ENCODE measurements at regions of chrX and their contacts with region 1.

Region 1: GRCh38 chrX:118847676-118848075 is 24.1 kb downstream of the ZCCHC12 start:
- DNase-seq: peak; percentile 41
- H3K4me3 ChIP-seq: no peak overlapping the region
- H3K27ac ChIP-seq: no peak overlapping the region
- H3K4me1 ChIP-seq: no peaks in the 10 kb centered on the region
- CTCF ChIP-seq: peak; percentile 78

Region 2: DNA sequence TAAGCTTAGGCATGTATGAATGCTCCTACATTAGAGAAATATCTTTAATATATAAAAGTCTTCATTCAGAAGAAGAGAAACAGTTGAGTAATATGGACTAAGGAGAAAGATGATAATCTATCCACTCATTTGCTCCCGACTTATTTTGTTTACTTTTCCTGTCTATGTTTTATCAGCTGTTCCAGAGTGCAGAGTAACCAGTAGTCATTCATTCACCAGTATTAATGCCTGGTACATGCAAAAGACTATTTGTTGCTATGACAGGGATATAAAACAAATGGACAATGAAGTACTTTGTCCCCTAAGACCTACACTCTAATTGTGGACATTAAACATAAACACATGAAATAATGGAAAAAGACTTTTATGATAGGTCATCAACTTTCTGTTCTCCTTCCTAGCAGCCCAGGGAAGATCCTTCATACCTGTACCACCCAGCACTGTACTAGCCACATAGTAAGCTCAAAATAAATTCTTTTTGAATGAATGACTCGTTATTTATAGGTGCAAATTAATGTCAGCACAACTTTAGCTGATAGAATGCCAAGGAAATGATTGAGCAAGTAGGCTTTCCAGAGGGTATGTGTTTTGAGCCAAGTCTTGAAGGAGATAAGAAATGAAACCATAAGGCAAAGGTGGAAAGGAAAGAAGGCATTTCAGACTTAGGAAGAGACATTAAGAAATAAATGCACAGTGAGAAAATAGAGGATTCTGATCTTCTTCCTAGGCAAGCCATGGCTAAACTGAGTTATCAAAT is 165.2 kb before region 1 on chrX:
- CTCF ChIA-PET with region 1: no interaction called
- POLR2A ChIA-PET with region 1: no interaction called
- intact Hi-C with region 1: no loop called
- DNase-seq: no peak
- H3K4me3 ChIP-seq: no peak overlapping the region
- H3K27ac ChIP-seq: no peak overlapping the region
- H3K4me1 ChIP-seq: no peaks in the 10 kb centered on the region
- CTCF ChIP-seq: no peak

Region 3: DNA sequence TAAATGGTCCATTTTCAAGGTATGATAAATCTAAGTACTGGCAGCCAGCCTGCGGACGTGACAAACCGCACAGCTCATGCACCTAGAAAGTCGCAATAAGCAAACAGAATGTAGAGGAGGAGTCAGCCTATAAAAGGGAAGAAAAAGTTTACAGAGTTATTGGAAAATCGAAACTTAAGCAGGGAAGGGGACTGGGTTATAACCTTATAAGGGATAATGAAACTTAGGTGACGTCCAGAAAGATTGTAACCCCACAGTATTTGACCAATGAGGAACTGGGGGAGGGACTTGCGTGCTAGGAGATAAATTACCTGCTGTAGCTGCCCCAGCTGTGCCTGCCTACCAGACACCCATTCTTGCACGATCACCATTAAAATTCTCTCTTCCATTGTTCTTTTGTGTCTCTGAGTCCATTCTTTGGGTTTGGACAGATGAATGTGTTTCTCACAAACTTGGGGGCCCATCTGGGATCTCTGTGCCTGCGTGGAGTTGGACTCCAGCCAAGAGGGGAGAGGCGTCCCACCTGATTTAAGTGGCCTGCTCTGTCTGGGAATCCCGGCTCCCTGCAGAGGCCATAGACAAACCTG is 37.0 kb after region 1 on chrX:
- CTCF ChIA-PET with region 1: no interaction called
- POLR2A ChIA-PET with region 1: no interaction called
- intact Hi-C with region 1: no loop called
- DNase-seq: no peak
- H3K4me3 ChIP-seq: no peak overlapping the region
- H3K27ac ChIP-seq: no peak overlapping the region
- H3K4me1 ChIP-seq: no peaks in the 10 kb centered on the region
- CTCF ChIP-seq: no peak

Region 4: GRCh38 chrX:119004920-119005524 is 157.3 kb after region 1 on chrX:
- CTCF ChIA-PET with region 1: no interaction called
- POLR2A ChIA-PET with region 1: no interaction called
- intact Hi-C with region 1: loop called (anchors 5 kb)
- DNase-seq: peak; percentile 42
- H3K4me3 ChIP-seq: no peak overlapping the region
- H3K27ac ChIP-seq: no peak overlapping the region
- H3K4me1 ChIP-seq: no peaks in the 10 kb centered on the region
- CTCF ChIP-seq: peak; percentile 78